Naive thymus-derived CD4-positive, alpha-beta T cell (primary cell): ENCODE measurements at regions of chr11 and their contacts with region 1.

Region 1: GRCh38 chr11:134068829-134069425 is at the start of gene JAM3:
- DNase-seq: peak; percentile 95 to 97 (median 96)
- ATAC-seq: peak; percentile 95
- H3K4me3 ChIP-seq: peak within 1 kb of the TSS; percentile 71
- H3K4me3 Mint-ChIP-seq: peak within 1 kb of the TSS; percentile 84 to 97 (median 92)
- H3K27ac ChIP-seq: peak within 1 kb of the TSS; percentile 71
- H3K27ac Mint-ChIP-seq: peak within 1 kb of the TSS; percentile 59 to 96 (median 89)
- H3K4me1 ChIP-seq: peaks cover 6% of the 10 kb centered on the region in 2 donors
- H3K4me1 Mint-ChIP-seq: peaks cover 5 to 22% (median 13%) of the 10 kb centered on the region in 7 donors
- H3K27me3 ChIP-seq: no peaks in the 10 kb centered on the region
- H3K27me3 Mint-ChIP-seq: peaks cover 0 to 80% (median 6%) of the 10 kb centered on the region in 5 donors
- total RNA-seq, gene JAM3: 4.8 to 8.2 (median 6.3) TPM

Region 2: DNA sequence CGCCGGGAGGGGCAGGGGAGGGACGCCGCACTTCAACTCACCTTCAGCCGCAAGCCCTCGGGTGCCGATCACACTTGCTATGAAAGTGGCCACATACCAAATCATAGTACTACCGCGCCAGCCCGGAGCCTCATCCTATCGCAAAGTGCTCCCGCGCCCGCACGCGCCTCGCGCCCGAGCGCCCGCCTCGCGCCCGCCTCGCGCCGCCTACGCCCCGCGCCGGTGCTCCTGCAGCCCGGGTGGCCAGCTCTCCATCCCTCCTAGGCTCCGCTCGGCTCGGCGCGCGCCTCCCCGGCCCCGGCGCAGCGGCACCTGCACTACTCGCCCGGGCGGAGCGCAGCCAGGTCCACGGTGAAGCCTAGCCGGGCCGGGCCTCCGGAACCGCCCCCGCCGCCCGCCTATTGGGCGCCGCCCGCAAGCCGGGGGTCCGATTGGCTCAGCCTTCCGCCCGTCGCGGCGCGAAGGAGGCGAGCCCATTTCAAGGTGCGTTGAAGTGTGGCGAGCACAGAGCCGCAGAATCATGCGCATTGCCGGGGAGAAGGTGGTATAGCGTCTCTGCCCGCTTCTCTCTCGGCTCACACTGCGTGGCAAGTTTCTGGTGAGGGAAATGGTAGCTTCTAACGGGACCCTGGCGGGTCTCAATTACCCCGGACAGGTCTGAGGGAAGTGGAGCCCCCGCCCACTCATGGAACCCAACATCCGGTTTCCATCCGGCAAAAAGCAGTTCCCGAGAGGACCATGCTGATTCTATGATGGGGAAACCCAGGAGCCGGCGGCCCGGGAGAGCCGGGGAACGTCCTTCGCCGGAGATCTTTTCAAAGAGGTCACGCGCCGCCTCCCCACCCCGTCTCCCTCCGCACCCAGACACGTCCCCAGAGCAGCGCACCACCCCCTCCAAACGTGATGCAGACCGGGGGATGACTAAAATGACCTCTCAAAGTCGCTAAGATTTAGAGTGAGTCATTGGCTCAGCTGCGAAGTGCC is 112.0 kb before region 1 on chr11 and contains the start of gene IGSF9B:
- CTCF ChIA-PET with region 1: no interaction called
- POLR2A ChIA-PET with region 1: no interaction called
- intact Hi-C with region 1: loop called in 1 of 2 experiments (anchors 1 kb)
- DNase-seq: peak; percentile 87 to 97 (median 92)
- ATAC-seq: peak; percentile 97
- H3K4me3 ChIP-seq: peak within 1 kb of the TSS; percentile 99
- H3K4me3 Mint-ChIP-seq: peak within 1 kb of the TSS; percentile 89 to 96 (median 92)
- H3K27ac ChIP-seq: peak within 1 kb of the TSS; percentile 75
- H3K27ac Mint-ChIP-seq: peak within 1 kb of the TSS; percentile 48 to 91 (median 88)
- H3K4me1 ChIP-seq: peaks cover 11 to 27% of the 10 kb centered on the region in 2 donors
- H3K4me1 Mint-ChIP-seq: peaks cover 29 to 52% (median 43%) of the 10 kb centered on the region in 7 donors
- H3K27me3 ChIP-seq: no peaks in the 10 kb centered on the region
- H3K27me3 Mint-ChIP-seq: peaks cover 7 to 24% (median 16%) of the 10 kb centered on the region in 5 donors
- total RNA-seq, gene IGSF9B: 17.6 to 155 (median 24.1) TPM

Region 3: GRCh38 chr11:134033696-134034491 is 35.0 kb before region 1 on chr11:
- CTCF ChIA-PET with region 1: no interaction called
- POLR2A ChIA-PET with region 1: interaction called, 3 read pairs
- intact Hi-C with region 1: loop called (anchors 1 to 2 kb)
- DNase-seq: peak in 8 of 9 donors; percentile 38 to 74 (median 60)
- ATAC-seq: peak; percentile 77
- H3K4me3 ChIP-seq: peak overlapping the region; percentile 25
- H3K4me3 Mint-ChIP-seq: peak overlapping the region; percentile 63 to 95 (median 75)
- H3K27ac ChIP-seq: peak overlapping the region; percentile 67
- H3K27ac Mint-ChIP-seq: peak overlapping the region; percentile 74 to 98 (median 85)
- H3K4me1 ChIP-seq: peaks cover 29 to 46% of the 10 kb centered on the region in 2 donors
- H3K4me1 Mint-ChIP-seq: peaks cover 33 to 79% (median 65%) of the 10 kb centered on the region in 7 donors
- H3K27me3 ChIP-seq: no peaks in the 10 kb centered on the region
- H3K27me3 Mint-ChIP-seq: peaks cover 0 to 24% (median 0%) of the 10 kb centered on the region in 5 donors

Region 4: DNA sequence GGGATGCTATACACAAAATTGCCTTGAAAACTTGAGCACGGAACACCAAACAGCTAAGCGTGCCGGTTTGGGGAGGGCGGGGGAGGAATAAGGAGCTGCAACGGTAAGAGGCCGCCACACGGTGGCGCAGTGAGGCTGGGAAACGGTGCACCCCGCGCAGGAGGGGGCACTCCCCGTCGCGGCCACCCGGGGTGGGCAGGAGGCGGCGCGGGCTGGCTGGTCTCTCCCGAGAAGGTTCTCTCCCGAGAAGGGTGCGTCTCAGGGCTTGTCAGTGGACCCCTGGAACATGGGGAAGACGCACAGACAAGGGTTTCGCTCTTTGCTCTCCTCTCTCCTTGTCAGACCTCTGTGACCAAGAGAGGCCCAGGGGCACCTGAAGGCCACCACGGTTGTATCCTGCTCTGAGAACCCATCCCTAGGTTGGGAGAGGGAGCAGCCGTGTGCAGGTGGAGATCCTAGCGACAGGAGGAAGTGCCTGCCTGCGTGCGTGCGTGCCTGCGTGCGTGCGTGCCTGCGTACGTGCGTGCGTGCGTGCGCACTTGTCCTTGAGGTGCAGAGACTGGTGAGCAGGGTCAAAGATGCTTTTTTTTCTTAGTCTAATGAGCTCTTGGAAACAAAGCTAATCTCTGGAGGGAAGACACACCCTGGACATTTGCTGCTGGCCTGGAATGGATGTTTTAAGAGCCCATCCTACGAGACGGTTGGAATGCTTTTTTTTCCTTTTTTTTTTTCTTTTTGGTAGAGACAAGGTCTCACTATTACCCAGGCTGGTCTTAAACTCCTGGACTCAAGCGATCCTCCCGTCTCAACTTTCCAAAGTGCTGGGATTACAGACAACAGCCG is 18.2 kb before region 1 on chr11:
- CTCF ChIA-PET with region 1: interaction called, 4 read pairs
- POLR2A ChIA-PET with region 1: interaction called, 5 read pairs
- intact Hi-C with region 1: loop called (anchors 1 to 2 kb)
- DNase-seq: peak; percentile 60 to 82 (median 71)
- ATAC-seq: peak; percentile 96
- H3K4me3 ChIP-seq: no peak overlapping the region
- H3K4me3 Mint-ChIP-seq: peak overlapping the region in 5 of 10 donors; percentile 13 to 51 (median 48)
- H3K27ac ChIP-seq: no peak overlapping the region
- H3K27ac Mint-ChIP-seq: peak overlapping the region in 3 of 9 donors; percentile 44 to 86 (median 70)
- H3K4me1 ChIP-seq: peaks cover 4% of the 10 kb centered on the region in 2 donors
- H3K4me1 Mint-ChIP-seq: peaks cover 0 to 14% (median 5%) of the 10 kb centered on the region in 7 donors
- H3K27me3 ChIP-seq: peaks cover 0 to 3% of the 10 kb centered on the region in 2 donors
- H3K27me3 Mint-ChIP-seq: peaks cover 14 to 26% (median 21%) of the 10 kb centered on the region in 5 donors

Region 5: GRCh38 chr11:134139873-134140331 is 71.0 kb after region 1 on chr11:
- CTCF ChIA-PET with region 1: interaction called, 3 read pairs
- POLR2A ChIA-PET with region 1: no interaction called
- intact Hi-C with region 1: loop called in 1 of 2 experiments (anchors 5 kb)
- DNase-seq: peak in 7 of 9 donors; percentile 15 to 55 (median 43)
- ATAC-seq: peak; percentile 72
- H3K4me3 ChIP-seq: no peak overlapping the region
- H3K4me3 Mint-ChIP-seq: no peak overlapping the region
- H3K27ac ChIP-seq: no peak overlapping the region
- H3K27ac Mint-ChIP-seq: no peak overlapping the region
- H3K4me1 ChIP-seq: no peaks in the 10 kb centered on the region
- H3K4me1 Mint-ChIP-seq: peaks cover 0 to 13% (median 3%) of the 10 kb centered on the region in 7 donors
- H3K27me3 ChIP-seq: no peaks in the 10 kb centered on the region
- H3K27me3 Mint-ChIP-seq: peaks cover 0 to under 1% (median 0%) of the 10 kb centered on the region in 5 donors

Region 6: DNA sequence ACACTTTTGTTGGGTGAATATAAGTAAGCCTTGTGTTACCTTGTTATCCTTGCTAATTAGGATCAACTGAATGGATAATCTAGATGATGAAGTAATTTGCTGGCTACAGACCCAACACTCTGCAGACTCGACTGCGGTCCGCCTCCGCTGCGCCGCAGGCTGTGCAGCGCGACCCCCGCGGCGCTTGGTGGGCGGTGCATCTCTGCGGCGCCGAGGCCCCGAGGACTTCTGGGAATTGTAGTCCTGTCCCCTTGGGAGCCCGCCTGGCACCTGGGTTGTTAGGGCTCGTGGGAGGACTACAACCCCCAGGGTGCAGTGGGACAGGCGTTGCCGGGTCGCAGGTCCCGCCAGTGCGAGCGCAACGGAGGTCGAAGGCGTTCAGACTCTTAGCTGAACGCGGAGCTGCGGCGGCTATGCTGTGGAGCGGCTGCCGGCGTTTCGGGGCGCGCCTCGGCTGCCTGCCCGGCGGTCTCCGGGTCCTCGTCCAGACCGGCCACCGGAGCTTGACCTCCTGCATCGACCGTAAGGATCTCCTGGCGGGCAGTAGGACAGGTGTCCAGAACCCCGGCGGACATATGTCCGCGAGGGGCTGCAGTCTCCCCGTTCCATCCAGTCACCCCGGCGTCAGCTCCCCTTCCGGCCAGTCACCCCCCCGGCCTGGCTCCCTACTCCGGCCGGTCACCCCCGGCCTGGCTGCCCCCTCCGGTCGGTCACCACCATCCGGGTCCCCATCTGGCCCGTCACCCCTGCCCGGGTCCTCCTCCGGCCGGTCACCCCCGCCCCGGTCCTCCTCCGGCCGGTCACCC is 184.5 kb after region 1 on chr11 and contains the starts of genes ACAD8 and THYN1:
- CTCF ChIA-PET with region 1: no interaction called
- POLR2A ChIA-PET with region 1: interaction called, 3 read pairs
- intact Hi-C with region 1: loop called in 1 of 2 experiments (anchors 1 kb)
- DNase-seq: peak; percentile 82 to 98 (median 95)
- ATAC-seq: peak; percentile 100
- H3K4me3 ChIP-seq: peak within 1 kb of the TSS; percentile 89
- H3K4me3 Mint-ChIP-seq: peak within 1 kb of the TSS; percentile 79 to 99 (median 94)
- H3K27ac ChIP-seq: peak within 1 kb of the TSS; percentile 73
- H3K27ac Mint-ChIP-seq: peak within 1 kb of the TSS; percentile 75 to 92 (median 88)
- H3K4me1 ChIP-seq: peaks cover 16 to 18% of the 10 kb centered on the region in 2 donors
- H3K4me1 Mint-ChIP-seq: peaks cover 24 to 47% (median 40%) of the 10 kb centered on the region in 7 donors
- H3K27me3 ChIP-seq: no peaks in the 10 kb centered on the region
- H3K27me3 Mint-ChIP-seq: no peaks in the 10 kb centered on the region
- total RNA-seq, gene ACAD8: 18.5 to 40.2 (median 26.1) TPM
- total RNA-seq, gene THYN1: 34.4 to 67.7 (median 62.5) TPM